GM12878 (cell line): ENCODE measurements at regions of chr11 and their contacts with region 1.

Region 1: DNA sequence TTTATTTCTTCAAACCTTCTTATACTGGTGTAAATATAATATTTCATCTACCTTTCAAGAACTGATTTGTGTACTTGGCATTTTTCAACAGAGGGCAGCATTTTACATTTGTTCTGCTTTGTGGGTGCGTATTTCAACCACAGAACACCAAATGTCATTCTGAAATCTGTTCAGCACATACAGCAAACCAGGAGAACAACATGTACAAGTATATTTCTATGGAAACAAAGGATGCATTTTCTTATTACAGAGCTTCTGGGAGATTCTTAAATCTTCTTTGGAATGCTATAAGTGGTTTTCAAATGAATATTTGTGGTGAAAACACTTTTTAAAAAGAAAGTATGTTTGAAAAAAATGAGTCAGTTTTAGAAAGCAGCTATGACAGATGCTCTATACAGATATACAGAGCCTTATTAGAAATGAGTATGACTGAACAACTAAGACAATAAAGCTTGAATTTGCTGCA is 946.0 kb downstream of the FAM181B start:
- DNase-seq: no peak
- ATAC-seq: peak; percentile 69
- H3K4me3 ChIP-seq: no peak overlapping the region
- H3K27ac ChIP-seq: no peak overlapping the region
- H3K4me1 ChIP-seq: no peaks in the 10 kb centered on the region
- H3K27me3 ChIP-seq: no peaks in the 10 kb centered on the region
- CTCF ChIP-seq: peak; percentile 6 to 36 (median 29); a peak in 3 of 6 replicates
- EP300 ChIP-seq: no peak
- POLR2A ChIP-seq: no peak
- RAD21 ChIP-seq: peak; percentile 54

Region 2: DNA sequence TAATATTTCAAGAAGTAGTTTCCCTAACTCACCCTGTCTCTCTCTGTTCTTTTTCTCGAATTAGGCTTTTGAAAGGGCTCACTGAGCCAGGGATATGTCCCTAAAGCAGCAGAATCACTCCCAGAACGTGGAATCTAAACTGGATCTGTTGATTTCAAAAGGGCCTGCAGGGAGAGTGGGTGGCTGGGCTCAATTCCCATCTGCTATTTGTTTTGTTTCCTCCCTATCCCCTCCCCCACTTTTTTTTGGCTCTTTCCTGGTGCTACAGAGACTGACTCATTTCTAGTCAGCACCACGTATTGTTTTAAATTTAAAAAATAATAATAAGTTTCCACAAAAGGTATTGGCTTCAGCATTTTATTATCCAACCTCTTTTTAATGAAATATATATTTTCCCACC is 15.5 kb before region 1 on chr11:
- CTCF ChIA-PET with region 1: interaction called, 13 read pairs
- POLR2A ChIA-PET with region 1: interaction called, 4 read pairs
- RAD21 ChIA-PET with region 1: no interaction called
- SMC1A ChIA-PET with region 1: interaction called, 4 read pairs
- in situ Hi-C with region 1: no loop called
- intact Hi-C with region 1: no loop called
- DNase-seq: no peak
- ATAC-seq: no peak
- H3K4me3 ChIP-seq: no peak overlapping the region
- H3K27ac ChIP-seq: no peak overlapping the region
- H3K4me1 ChIP-seq: no peaks in the 10 kb centered on the region
- H3K27me3 ChIP-seq: no peaks in the 10 kb centered on the region
- CTCF ChIP-seq: no peak
- EP300 ChIP-seq: no peak
- POLR2A ChIP-seq: no peak
- RAD21 ChIP-seq: no peak

Region 3: DNA sequence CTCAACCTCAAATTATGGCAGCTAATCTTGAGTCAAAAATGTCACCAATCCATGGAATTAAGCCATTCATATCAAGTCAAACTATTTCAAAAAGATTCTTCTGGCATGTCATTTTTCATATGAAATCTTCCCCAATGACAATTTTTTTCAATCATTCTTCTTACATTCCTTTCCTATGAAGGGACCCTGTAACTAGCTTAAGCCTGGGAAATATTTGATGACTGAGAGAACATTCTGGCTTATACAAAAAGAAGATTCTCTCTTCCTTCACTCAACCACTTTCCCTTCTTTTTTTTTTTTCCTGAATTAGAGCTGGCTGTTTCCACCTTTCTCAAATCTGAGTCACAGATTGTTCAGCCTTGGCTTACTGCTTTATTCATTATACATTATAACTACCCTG is 42.4 kb after region 1 on chr11:
- CTCF ChIA-PET with region 1: no interaction called
- POLR2A ChIA-PET with region 1: no interaction called
- RAD21 ChIA-PET with region 1: no interaction called
- SMC1A ChIA-PET with region 1: no interaction called
- in situ Hi-C with region 1: no loop called
- intact Hi-C with region 1: no loop called
- DNase-seq: no peak
- ATAC-seq: no peak
- H3K4me3 ChIP-seq: no peak overlapping the region
- H3K27ac ChIP-seq: no peak overlapping the region
- H3K4me1 ChIP-seq: no peaks in the 10 kb centered on the region
- H3K27me3 ChIP-seq: no peaks in the 10 kb centered on the region
- CTCF ChIP-seq: no peak
- EP300 ChIP-seq: no peak
- POLR2A ChIP-seq: no peak
- RAD21 ChIP-seq: no peak

Region 4: GRCh38 chr11:81963018-81963417 is 175.4 kb after region 1 on chr11:
- CTCF ChIA-PET with region 1: interaction called, 13 read pairs
- POLR2A ChIA-PET with region 1: no interaction called
- RAD21 ChIA-PET with region 1: no interaction called
- SMC1A ChIA-PET with region 1: no interaction called
- in situ Hi-C with region 1: no loop called
- intact Hi-C with region 1: loop called (anchors 5 kb)
- DNase-seq: no peak
- ATAC-seq: no peak
- H3K4me3 ChIP-seq: no peak overlapping the region
- H3K27ac ChIP-seq: no peak overlapping the region
- H3K4me1 ChIP-seq: no peaks in the 10 kb centered on the region
- H3K27me3 ChIP-seq: no peaks in the 10 kb centered on the region; a peak in 1 of 4 replicates
- CTCF ChIP-seq: peak in 2 of 3 experiments; percentile 18 to 30; a peak in 2 of 6 replicates
- EP300 ChIP-seq: no peak
- POLR2A ChIP-seq: no peak
- RAD21 ChIP-seq: no peak